ENCODE measurements at regions of chr9 and their contacts with region 1.

Region 1: GRCh38 chr9:128881901-128882681 is at the starts of genes KYAT1 and LRRC8A:
- DNase-seq: peak; percentile 96 to 99 (median 97)
- H3K4me3 ChIP-seq: peak within 1 kb of the TSS; percentile 74 to 90 (median 78)
- H3K27ac ChIP-seq: peak within 1 kb of the TSS; percentile 57 to 97 (median 90)
- H3K4me1 ChIP-seq: peaks cover 9 to 22% of the 10 kb centered on the region in 2 donors
- H3K27me3 ChIP-seq: no peaks in the 10 kb centered on the region
- CTCF ChIP-seq: peak in 1 of 6 experiments; percentile 5
- POLR2A ChIP-seq: peak; percentile 64 to 88
- total RNA-seq, gene KYAT1: 3.5 to 10.3 (median 7.7) TPM
- total RNA-seq, gene LRRC8A: 10.3 to 88.3 (median 41.0) TPM

Region 2: DNA sequence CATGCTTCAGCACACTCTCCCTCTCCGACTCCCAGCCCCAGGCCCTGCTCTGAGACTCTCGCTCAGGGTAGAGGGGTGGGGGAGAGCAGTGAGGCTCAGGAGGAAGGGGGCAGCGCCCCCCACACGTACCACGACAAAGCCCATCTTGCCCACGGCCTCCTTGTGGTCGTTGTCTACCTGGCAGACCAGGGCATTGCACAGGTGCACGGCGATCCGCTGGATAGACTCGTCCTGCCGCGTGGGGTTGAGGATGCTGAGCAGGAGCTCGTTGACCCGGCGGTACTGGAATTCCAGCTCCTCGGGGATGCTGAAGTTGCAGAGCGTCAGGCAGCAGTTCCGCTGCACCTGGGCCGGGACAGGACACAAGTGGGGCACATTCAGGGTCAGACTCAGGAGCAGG is 139.7 kb before region 1 on chr9:
- intact Hi-C with region 1: no loop called
- DNase-seq: no peak
- H3K4me3 ChIP-seq: no peak overlapping the region
- H3K27ac ChIP-seq: no peak overlapping the region
- H3K4me1 ChIP-seq: peaks cover 0 to 2% of the 10 kb centered on the region in 2 donors
- H3K27me3 ChIP-seq: no peaks in the 10 kb centered on the region
- CTCF ChIP-seq: no peak
- POLR2A ChIP-seq: no peak

Region 3: GRCh38 chr9:128798896-128799295 is 83.2 kb before region 1 on chr9:
- intact Hi-C with region 1: no loop called
- DNase-seq: no peak
- H3K4me3 ChIP-seq: no peak overlapping the region
- H3K27ac ChIP-seq: no peak overlapping the region
- H3K4me1 ChIP-seq: no peaks in the 10 kb centered on the region
- H3K27me3 ChIP-seq: no peaks in the 10 kb centered on the region
- CTCF ChIP-seq: no peak
- POLR2A ChIP-seq: no peak

Region 4: GRCh38 chr9:128921881-128922763 is 40.0 kb after region 1 on chr9:
- intact Hi-C with region 1: loop called (anchors 5 kb)
- DNase-seq: peak in 6 of 7 donors; percentile 52 to 75 (median 66)
- H3K4me3 ChIP-seq: peak overlapping the region in 3 of 4 donors; percentile 48 to 99 (median 72)
- H3K27ac ChIP-seq: peak overlapping the region; percentile 41 to 90 (median 85)
- H3K4me1 ChIP-seq: peaks cover 31 to 40% of the 10 kb centered on the region in 2 donors
- H3K27me3 ChIP-seq: no peaks in the 10 kb centered on the region
- CTCF ChIP-seq: peak in 1 of 6 experiments; percentile 24
- POLR2A ChIP-seq: peak in 1 of 2 donors; percentile 18

Measured in adrenal gland (tissue), 19 donors.